ENCODE measurements at regions of chr17 and their contacts with region 1.

Region 1: GRCh38 chr17:40531051-40531991 is 29.9 kb upstream of the TNS4 start:
- DNase-seq: peak in 33 of 35 experiments; percentile 13 to 86 (median 77)
- ATAC-seq: peak in 1 of 4 experiments; percentile 17
- H3K4me3 ChIP-seq: no peak overlapping the region
- H3K4me3 Mint-ChIP-seq: peak overlapping the region in 2 of 3 donors; percentile 4 to 63
- H3K27ac ChIP-seq: peak overlapping the region; percentile 20
- H3K27ac Mint-ChIP-seq: peak overlapping the region; percentile 71 to 73
- H3K4me1 ChIP-seq: peaks cover 55 to 66% of the 10 kb centered on the region in 2 experiments
- H3K4me1 Mint-ChIP-seq: peaks cover 67 to 83% (median 68%) of the 10 kb centered on the region in 3 donors
- H3K27me3 ChIP-seq: no peaks in the 10 kb centered on the region
- H3K27me3 Mint-ChIP-seq: no peaks in the 10 kb centered on the region

Region 2: DNA sequence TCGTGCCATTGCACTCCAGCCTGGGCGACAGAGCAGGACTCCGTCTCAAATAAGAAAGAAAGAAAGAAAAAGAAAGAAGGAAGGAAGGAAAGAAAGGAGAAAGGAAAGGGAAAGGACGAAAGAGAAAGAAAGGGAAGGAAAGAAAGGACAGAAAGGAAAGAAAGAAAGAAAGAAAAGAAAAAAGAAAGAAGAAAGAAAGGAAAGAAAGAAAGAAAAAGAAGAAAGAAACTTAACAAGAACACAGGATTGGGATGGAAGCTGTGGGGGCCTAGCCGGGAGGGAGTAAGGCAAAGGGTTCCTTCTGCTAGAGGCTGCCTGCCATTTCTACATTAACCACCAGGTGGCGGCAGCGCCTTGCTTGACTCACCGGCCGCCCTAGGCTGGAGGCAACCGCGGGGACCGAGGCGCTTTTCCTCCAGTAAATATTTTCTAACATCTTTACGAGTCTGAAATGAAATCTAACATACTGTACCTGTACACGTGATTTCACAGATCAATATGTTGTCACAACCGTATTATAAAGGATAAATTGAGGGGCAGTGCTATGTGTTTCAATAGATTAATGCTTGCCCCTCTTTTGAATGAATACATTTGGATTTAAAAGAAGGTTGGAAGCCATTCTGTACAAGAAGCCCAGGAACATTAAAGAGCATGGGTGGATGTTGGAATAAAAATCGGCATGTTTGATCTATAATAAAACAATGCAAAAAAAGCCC is 172.8 kb before region 1 on chr17:
- CTCF ChIA-PET with region 1: interaction called, 3 to 16 read pairs
- POLR2A ChIA-PET with region 1: no interaction called
- DNase-seq: peak; percentile 65 to 94 (median 84)
- ATAC-seq: peak; percentile 53 to 58 (median 57)
- H3K4me3 ChIP-seq: no peak overlapping the region
- H3K4me3 Mint-ChIP-seq: no peak overlapping the region
- H3K27ac ChIP-seq: no peak overlapping the region
- H3K27ac Mint-ChIP-seq: peak overlapping the region in 1 of 2 donors; percentile 61
- H3K4me1 ChIP-seq: peaks cover 0 to 19% of the 10 kb centered on the region in 2 experiments
- H3K4me1 Mint-ChIP-seq: peaks cover 0 to 19% (median 19%) of the 10 kb centered on the region in 3 donors
- H3K27me3 ChIP-seq: peaks cover 0 to 25% of the 10 kb centered on the region in 2 experiments
- H3K27me3 Mint-ChIP-seq: peaks cover 13 to 14% of the 10 kb centered on the region in 2 donors

Region 3: GRCh38 chr17:40417609-40418427 is 113.5 kb before region 1 on chr17 and contains the start of gene TOP2A:
- CTCF ChIA-PET with region 1: interaction called, 3 to 44 read pairs
- POLR2A ChIA-PET with region 1: interaction called, 3 to 6 read pairs
- DNase-seq: peak; percentile 81 to 100 (median 95)
- ATAC-seq: peak; percentile 98 to 100 (median 99)
- H3K4me3 ChIP-seq: peak within 1 kb of the TSS; percentile 61 to 74
- H3K4me3 Mint-ChIP-seq: peak within 1 kb of the TSS; percentile 82 to 92 (median 90)
- H3K27ac ChIP-seq: peak within 1 kb of the TSS; percentile 43
- H3K27ac Mint-ChIP-seq: peak within 1 kb of the TSS; percentile 88 to 91
- H3K4me1 ChIP-seq: peaks cover 7 to 28% of the 10 kb centered on the region in 2 experiments
- H3K4me1 Mint-ChIP-seq: peaks cover 27 to 30% (median 28%) of the 10 kb centered on the region in 3 donors
- H3K27me3 ChIP-seq: peaks cover 0 to 8% of the 10 kb centered on the region in 2 experiments
- H3K27me3 Mint-ChIP-seq: no peaks in the 10 kb centered on the region
- total RNA-seq, gene TOP2A: 2.3 to 4.2 (median 2.7) TPM

Region 4: GRCh38 chr17:40475234-40475908 is 56.0 kb before region 1 on chr17:
- CTCF ChIA-PET with region 1: interaction called, 10 to 22 read pairs
- POLR2A ChIA-PET with region 1: interaction called in 1 of 2 experiments, 4 read pairs
- DNase-seq: no peak
- ATAC-seq: no peak
- H3K4me3 ChIP-seq: no peak overlapping the region
- H3K4me3 Mint-ChIP-seq: no peak overlapping the region
- H3K27ac ChIP-seq: no peak overlapping the region
- H3K27ac Mint-ChIP-seq: no peak overlapping the region
- H3K4me1 ChIP-seq: peaks cover 10 to 49% of the 10 kb centered on the region in 2 experiments
- H3K4me1 Mint-ChIP-seq: peaks cover 17 to 31% (median 18%) of the 10 kb centered on the region in 3 donors
- H3K27me3 ChIP-seq: peaks cover 0 to 3% of the 10 kb centered on the region in 2 experiments
- H3K27me3 Mint-ChIP-seq: no peaks in the 10 kb centered on the region

Region 5: GRCh38 chr17:40516581-40517285 is 14.6 kb before region 1 on chr17:
- CTCF ChIA-PET with region 1: interaction called, 3 to 38 read pairs
- POLR2A ChIA-PET with region 1: interaction called, 5 to 9 read pairs
- DNase-seq: peak in 34 of 35 experiments; percentile 37 to 90 (median 68)
- ATAC-seq: peak; percentile 77 to 89 (median 84)
- H3K4me3 ChIP-seq: peak overlapping the region; percentile 35 to 42
- H3K4me3 Mint-ChIP-seq: peak overlapping the region; percentile 55 to 78 (median 76)
- H3K27ac ChIP-seq: peak overlapping the region; percentile 25
- H3K27ac Mint-ChIP-seq: peak overlapping the region; percentile 5 to 74
- H3K4me1 ChIP-seq: peaks cover 54 to 77% of the 10 kb centered on the region in 2 experiments
- H3K4me1 Mint-ChIP-seq: peaks cover 63 to 69% (median 67%) of the 10 kb centered on the region in 3 donors
- H3K27me3 ChIP-seq: peaks cover 0 to 4% of the 10 kb centered on the region in 2 experiments
- H3K27me3 Mint-ChIP-seq: peaks cover 0 to 4% of the 10 kb centered on the region in 2 donors

Region 6: GRCh38 chr17:40559954-40560591 is 28.8 kb after region 1 on chr17:
- CTCF ChIA-PET with region 1: interaction called, 8 to 54 read pairs
- POLR2A ChIA-PET with region 1: interaction called, 4 to 6 read pairs
- DNase-seq: peak; percentile 54 to 90 (median 77)
- ATAC-seq: peak; percentile 32 to 56 (median 44)
- H3K4me3 ChIP-seq: peak overlapping the region; percentile 75 to 97
- H3K4me3 Mint-ChIP-seq: peak overlapping the region; percentile 91 to 99 (median 93)
- H3K27ac ChIP-seq: peak overlapping the region; percentile 89
- H3K27ac Mint-ChIP-seq: peak overlapping the region; percentile 95 to 100
- H3K4me1 ChIP-seq: peaks cover 37 to 97% of the 10 kb centered on the region in 2 experiments
- H3K4me1 Mint-ChIP-seq: peaks cover 74 to 94% (median 88%) of the 10 kb centered on the region in 3 donors
- H3K27me3 ChIP-seq: no peaks in the 10 kb centered on the region
- H3K27me3 Mint-ChIP-seq: no peaks in the 10 kb centered on the region

Region 7: DNA sequence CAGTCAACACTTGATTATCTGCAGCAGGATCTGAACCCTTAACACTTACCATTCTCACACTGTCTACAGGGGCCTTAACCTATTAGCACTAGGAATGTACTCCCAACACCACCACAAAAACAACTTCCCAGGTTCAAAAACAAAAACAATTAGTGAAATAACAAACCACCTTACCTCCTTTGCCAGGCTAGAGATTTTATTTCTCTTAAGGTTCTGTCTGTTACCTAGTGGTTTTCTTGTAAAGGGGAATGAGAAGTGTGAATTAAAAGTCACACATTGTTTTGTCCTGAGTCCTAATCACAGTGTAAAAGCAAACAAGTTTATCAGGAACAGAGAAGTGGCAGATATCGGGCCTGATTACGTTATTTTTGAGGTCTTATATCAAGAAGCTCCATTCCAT is 106.6 kb after region 1 on chr17:
- CTCF ChIA-PET with region 1: no interaction called
- POLR2A ChIA-PET with region 1: no interaction called
- DNase-seq: no peak
- ATAC-seq: no peak
- H3K4me3 ChIP-seq: no peak overlapping the region
- H3K4me3 Mint-ChIP-seq: no peak overlapping the region
- H3K27ac ChIP-seq: no peak overlapping the region
- H3K27ac Mint-ChIP-seq: peak overlapping the region in 1 of 2 donors; percentile 1
- H3K4me1 ChIP-seq: no peaks in the 10 kb centered on the region
- H3K4me1 Mint-ChIP-seq: peaks cover 25 to 45% (median 39%) of the 10 kb centered on the region in 3 donors
- H3K27me3 ChIP-seq: no peaks in the 10 kb centered on the region
- H3K27me3 Mint-ChIP-seq: no peaks in the 10 kb centered on the region